ENCODE measurements at regions of chr18 and their contacts with region 1.

Region 1: GRCh38 chr18:45690975-45691815 is 32.8 kb upstream of the SLC14A1 start:
- DNase-seq: peak in 1 of 2 donors; percentile 87
- H3K4me3 ChIP-seq: no peak overlapping the region
- H3K27ac ChIP-seq: no peak overlapping the region
- H3K4me1 ChIP-seq: no peaks in the 10 kb centered on the region
- H3K27me3 ChIP-seq: no peaks in the 10 kb centered on the region
- CTCF ChIP-seq: peak; percentile 82 to 88 (median 82)

Region 2: DNA sequence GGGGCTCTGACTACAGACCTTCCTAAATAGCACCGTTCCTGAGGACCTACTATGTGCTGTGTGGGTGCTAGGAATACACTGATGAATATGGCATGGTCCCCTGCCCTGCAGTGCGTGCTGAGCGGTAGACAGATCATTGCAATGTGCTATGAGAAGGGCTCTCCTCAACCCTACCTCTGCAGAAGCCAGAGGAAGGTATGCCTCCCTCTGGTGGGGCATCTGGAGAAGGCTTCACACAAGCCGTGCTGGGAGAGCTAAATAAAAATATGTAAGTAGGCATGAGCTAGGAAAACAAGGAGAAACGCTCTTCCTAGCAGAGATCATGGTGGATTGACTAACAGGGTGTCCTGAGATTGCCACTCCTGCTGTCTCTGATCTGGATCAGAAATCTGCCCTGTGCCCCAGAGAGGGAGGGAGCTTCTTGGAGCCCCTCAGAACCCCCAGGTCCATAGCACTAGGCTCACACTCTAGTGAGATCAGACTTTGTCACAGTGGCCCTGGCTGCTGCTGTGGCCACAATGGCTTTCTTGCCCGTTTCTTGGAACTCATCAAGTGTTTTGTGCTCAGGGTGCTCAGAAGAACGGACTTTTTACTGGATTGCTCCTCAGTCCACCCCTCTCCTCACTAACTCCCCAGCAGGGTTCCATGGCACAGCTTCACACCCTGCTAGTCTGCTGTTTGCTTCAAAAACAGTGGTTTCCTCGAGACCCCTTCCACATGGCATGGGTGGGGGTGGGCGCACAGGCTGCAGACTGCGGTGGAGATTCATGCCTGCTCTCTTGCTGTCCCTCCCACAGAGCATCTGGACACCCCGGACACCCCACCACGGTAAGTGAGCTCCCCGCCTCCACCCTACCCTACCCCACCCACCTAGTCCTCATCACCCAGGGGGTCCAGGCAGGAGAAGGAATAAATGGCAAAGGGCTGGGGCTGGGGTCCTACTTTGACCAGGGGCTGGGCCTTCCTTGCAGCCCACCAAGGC is 148.5 kb after region 1 on chr18:
- intact Hi-C with region 1: loop called (anchors 1 kb)
- DNase-seq: no peak
- H3K4me3 ChIP-seq: no peak overlapping the region
- H3K27ac ChIP-seq: no peak overlapping the region
- H3K4me1 ChIP-seq: peaks cover 2 to 14% of the 10 kb centered on the region in 2 donors
- H3K27me3 ChIP-seq: no peaks in the 10 kb centered on the region
- CTCF ChIP-seq: peak; percentile 53 to 72 (median 59)

Region 3: GRCh38 chr18:45850021-45850420 is 158.8 kb after region 1 on chr18:
- intact Hi-C with region 1: loop called (anchors 5 kb)
- DNase-seq: no peak
- H3K4me3 ChIP-seq: no peak overlapping the region
- H3K27ac ChIP-seq: no peak overlapping the region
- H3K4me1 ChIP-seq: no peaks in the 10 kb centered on the region
- H3K27me3 ChIP-seq: no peaks in the 10 kb centered on the region
- CTCF ChIP-seq: peak in 2 of 3 experiments; percentile 14 to 18

Region 4: GRCh38 chr18:45879681-45880655 is 188.8 kb after region 1 on chr18:
- intact Hi-C with region 1: loop called (anchors 1 kb)
- DNase-seq: peak in 1 of 2 donors; percentile 80
- H3K4me3 ChIP-seq: no peak overlapping the region
- H3K27ac ChIP-seq: peak overlapping the region; percentile 22 to 48
- H3K4me1 ChIP-seq: no peaks in the 10 kb centered on the region
- H3K27me3 ChIP-seq: no peaks in the 10 kb centered on the region
- CTCF ChIP-seq: peak; percentile 91 to 100 (median 98)

Measured in ascending aorta (tissue), 2 donors.